PC-9 (cell line): ENCODE measurements at regions of chr16 and their contacts with region 1.

Region 1: GRCh38 chr16:14600164-14600563 is 29.9 kb downstream of the PARN start:
- DNase-seq: peak in 1 of 2 experiments; percentile 43
- H3K4me3 ChIP-seq: no peak overlapping the region
- H3K27ac ChIP-seq: no peak overlapping the region
- H3K4me1 ChIP-seq: no peaks in the 10 kb centered on the region
- H3K27me3 ChIP-seq: no peaks in the 10 kb centered on the region
- CTCF ChIP-seq: peak; percentile 72

Region 2: GRCh38 chr16:14249291-14250032 is 350.7 kb before region 1 on chr16:
- CTCF ChIA-PET with region 1: no interaction called
- POLR2A ChIA-PET with region 1: no interaction called
- intact Hi-C with region 1: loop called (anchors 5 kb)
- DNase-seq: peak in 1 of 2 experiments; percentile 55
- H3K4me3 ChIP-seq: no peak overlapping the region
- H3K27ac ChIP-seq: no peak overlapping the region
- H3K4me1 ChIP-seq: no peaks in the 10 kb centered on the region
- H3K27me3 ChIP-seq: no peaks in the 10 kb centered on the region
- CTCF ChIP-seq: peak; percentile 88

Region 3: GRCh38 chr16:14280541-14280940 is 319.6 kb before region 1 on chr16:
- CTCF ChIA-PET with region 1: interaction called, 13 read pairs
- POLR2A ChIA-PET with region 1: no interaction called
- intact Hi-C with region 1: no loop called
- DNase-seq: no peak
- H3K4me3 ChIP-seq: no peak overlapping the region
- H3K27ac ChIP-seq: no peak overlapping the region
- H3K4me1 ChIP-seq: peaks cover 12% of the 10 kb centered on the region
- H3K27me3 ChIP-seq: no peaks in the 10 kb centered on the region
- CTCF ChIP-seq: no peak